Spleen (tissue), 13 donors: ENCODE measurements at regions of chr11 and their contacts with region 1.

Region 1: GRCh38 chr11:92642177-92642931 is 327.1 kb upstream of the MTNR1B start:
- DNase-seq: no peak
- H3K4me3 ChIP-seq: no peak overlapping the region
- H3K27ac ChIP-seq: no peak overlapping the region
- H3K4me1 ChIP-seq: no peaks in the 10 kb centered on the region
- H3K27me3 ChIP-seq: no peaks in the 10 kb centered on the region
- CTCF ChIP-seq: no peak
- POLR2A ChIP-seq: no peak

Region 2: DNA sequence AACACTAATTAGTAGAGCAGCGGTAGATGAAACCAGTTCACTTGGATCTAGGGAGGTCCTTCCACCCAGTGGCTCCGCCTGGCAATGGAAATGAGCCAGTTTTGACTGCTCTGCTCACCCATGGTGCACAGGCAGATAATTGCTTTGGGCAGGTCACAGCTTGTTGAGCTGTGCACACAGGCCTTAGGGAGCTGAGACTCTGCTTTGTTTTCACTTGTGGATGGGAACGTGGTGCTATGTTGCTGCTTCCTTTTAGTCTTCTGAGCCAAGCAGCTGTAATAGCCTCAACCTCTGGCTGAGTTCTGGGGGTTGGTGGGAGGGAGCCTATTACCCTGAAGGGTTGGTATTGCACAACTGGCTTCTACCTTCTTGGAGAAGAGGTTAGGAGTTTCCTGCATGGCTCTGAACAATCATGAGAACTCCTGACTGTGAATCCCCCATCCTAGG is 64.8 kb after region 1 on chr11:
- intact Hi-C with region 1: loop called (anchors 10 kb)
- DNase-seq: no peak
- H3K4me3 ChIP-seq: no peak overlapping the region
- H3K27ac ChIP-seq: peak overlapping the region in 2 of 8 donors; percentile 5 to 28
- H3K4me1 ChIP-seq: peaks cover 0 to 20% (median 0%) of the 10 kb centered on the region in 6 donors
- H3K27me3 ChIP-seq: peaks cover 0 to 33% (median 0%) of the 10 kb centered on the region in 7 donors
- CTCF ChIP-seq: no peak
- POLR2A ChIP-seq: no peak